ENCODE measurements at regions of chr6 and their contacts with region 1.

Region 1: GRCh38 chr6:34425498-34426410 is at the start of gene RPS10:
- DNase-seq: peak; percentile 95
- ATAC-seq: peak; percentile 95
- H3K4me3 ChIP-seq: peak within 1 kb of the TSS; percentile 99
- H3K27ac ChIP-seq: peak within 1 kb of the TSS; percentile 47
- H3K4me1 ChIP-seq: peaks cover 19% of the 10 kb centered on the region
- H3K27me3 ChIP-seq: no peaks in the 10 kb centered on the region
- CTCF ChIP-seq: no peak
- total RNA-seq, gene RPS10: 2,227 and 3,060 TPM in 2 replicates

Region 2: DNA sequence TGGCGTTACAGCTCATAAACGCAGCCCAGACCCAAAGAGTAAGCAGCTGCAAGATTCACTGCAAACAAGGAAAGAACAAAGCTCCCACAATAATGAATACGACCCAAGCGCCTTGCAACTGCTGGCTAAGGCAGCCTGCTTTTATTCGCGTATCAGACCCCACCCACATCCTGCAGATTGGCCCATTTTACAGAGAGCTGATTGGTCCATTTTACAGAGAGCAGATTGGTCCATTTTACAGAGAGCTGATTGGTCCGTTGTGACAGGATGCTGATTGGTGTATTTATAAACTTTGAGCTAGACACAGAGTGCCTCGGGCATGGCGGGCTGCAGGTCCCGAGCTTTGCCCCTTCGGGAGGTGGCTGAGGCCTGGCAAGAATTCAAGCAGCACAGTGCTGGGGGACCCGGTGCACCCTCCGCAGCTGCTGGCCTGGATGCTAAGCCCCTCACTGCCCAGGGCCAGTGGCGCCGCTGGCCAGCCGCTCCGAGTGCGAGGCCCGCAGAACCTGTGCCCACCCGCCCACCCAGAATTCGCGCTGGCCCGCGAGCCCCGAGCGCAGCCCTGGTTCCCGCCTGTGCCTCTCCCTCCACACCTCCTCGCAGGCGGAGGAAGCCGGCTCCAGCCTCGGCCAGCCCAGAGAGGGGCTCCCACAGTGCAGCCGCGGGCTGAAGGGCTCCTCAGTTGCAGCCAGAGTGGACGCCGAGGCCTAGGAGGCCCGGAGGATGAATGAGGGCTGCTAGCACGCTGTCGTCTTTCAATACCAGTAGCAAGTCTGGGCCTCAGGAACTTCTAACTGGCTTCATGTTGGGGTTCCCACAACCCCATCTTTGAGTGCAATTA is 11.3 kb after region 1 on chr6:
- CTCF ChIA-PET with region 1: no interaction called
- POLR2A ChIA-PET with region 1: no interaction called
- intact Hi-C with region 1: no loop called
- DNase-seq: no peak
- ATAC-seq: no peak
- H3K4me3 ChIP-seq: no peak overlapping the region
- H3K27ac ChIP-seq: no peak overlapping the region
- H3K4me1 ChIP-seq: no peaks in the 10 kb centered on the region
- H3K27me3 ChIP-seq: no peaks in the 10 kb centered on the region
- CTCF ChIP-seq: no peak

Region 3: DNA sequence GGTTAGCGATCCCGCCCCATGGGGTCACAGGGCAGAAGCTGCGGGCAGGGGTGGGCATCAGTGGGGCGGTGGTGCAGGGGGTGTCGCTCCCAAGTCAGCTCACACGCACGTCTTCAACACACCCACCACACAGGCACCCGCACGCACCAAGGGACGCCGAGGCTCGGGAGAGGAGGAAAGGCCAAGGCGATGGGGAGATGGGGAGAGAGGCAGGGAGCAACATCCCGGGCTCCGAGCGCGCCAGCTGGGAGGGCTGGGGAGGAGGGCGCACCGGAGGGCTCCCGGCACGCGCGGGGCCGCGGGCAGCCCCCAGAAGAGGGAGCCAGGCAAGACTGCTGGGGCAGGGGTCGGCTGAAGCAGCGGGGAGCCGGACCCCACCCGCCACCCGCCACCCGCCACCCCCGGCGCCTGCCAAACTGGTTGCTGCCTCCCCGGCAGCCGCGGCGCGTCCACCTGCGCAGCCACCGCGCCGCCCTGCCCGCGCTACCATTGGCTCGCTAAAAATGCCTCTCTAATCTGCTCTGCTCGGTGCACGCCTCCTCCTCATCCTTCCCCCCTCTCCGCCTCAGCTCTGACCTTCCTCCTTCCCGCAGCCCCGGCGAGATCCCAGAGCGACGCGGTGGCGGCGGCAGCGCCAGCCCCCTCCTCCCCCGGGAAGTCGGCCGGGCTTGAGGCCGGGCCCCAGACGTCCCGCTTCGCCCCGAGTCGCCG is 39.9 kb after region 1 on chr6 and contains the start of gene PACSIN1:
- CTCF ChIA-PET with region 1: no interaction called
- POLR2A ChIA-PET with region 1: no interaction called
- intact Hi-C with region 1: no loop called
- DNase-seq: peak; percentile 51
- ATAC-seq: peak; percentile 62
- H3K4me3 ChIP-seq: peak within 1 kb of the TSS; percentile 71
- H3K27ac ChIP-seq: no peak within 1 kb of the TSS
- H3K4me1 ChIP-seq: peaks cover 19% of the 10 kb centered on the region; the same call in 1 of the 2 replicates
- H3K27me3 ChIP-seq: no peaks in the 10 kb centered on the region
- CTCF ChIP-seq: no peak
- total RNA-seq, gene PACSIN1: 2.3 and 3.5 TPM in 2 replicates

Region 4: DNA sequence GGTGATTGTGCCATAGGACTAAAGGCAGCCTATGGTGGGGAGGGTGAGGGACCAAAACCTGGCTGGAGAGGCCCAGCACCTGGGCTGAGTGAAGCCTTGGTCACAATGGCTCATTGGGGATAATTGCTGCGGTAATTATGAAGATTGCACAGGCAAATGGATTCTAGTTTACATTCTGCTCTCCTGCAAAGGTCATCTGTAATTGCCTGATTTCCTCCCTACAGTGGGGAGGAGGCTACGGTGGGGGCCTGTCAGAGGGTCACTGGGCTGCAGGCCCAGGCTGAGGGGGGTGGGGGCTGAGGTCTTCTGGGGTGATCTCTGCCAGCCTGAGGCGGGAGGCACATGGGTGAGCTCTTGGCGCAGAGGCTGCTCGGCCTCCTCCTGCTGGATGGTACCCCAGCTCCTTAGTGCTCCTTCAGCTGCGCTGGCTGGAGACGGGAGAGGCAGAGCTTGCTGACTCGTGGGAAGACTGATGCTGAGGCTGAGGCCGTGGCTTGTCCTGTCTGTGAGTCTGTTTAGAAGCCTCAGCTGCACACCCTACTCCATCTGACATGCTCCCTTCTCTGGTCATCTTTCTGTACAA is 70.4 kb after region 1 on chr6:
- CTCF ChIA-PET with region 1: no interaction called
- POLR2A ChIA-PET with region 1: interaction called, 10 read pairs
- intact Hi-C with region 1: no loop called
- DNase-seq: no peak
- ATAC-seq: no peak
- H3K4me3 ChIP-seq: no peak overlapping the region
- H3K27ac ChIP-seq: no peak overlapping the region
- H3K4me1 ChIP-seq: no peaks in the 10 kb centered on the region
- H3K27me3 ChIP-seq: no peaks in the 10 kb centered on the region
- CTCF ChIP-seq: no peak

Region 5: DNA sequence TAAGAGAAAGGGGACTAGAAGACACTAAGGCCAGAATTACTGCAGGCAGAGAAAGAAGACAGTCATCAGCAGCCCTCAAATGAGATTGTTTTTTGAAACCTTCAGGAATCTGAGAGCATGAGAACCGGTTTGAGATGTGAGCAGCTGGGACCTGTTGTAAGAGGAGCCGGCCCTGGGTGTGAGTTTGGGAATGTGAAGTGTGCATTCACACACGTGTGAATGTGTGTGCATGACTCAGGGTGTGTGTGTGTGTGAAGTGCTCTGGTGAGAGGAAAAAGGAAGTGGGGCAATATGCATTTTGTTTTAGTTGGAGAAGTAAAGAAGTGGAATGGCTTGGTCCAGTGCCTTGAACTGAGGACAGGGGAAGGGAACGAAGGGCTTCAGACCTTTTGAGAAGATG is 792.3 kb after region 1 on chr6:
- CTCF ChIA-PET with region 1: no interaction called
- POLR2A ChIA-PET with region 1: interaction called, 11 read pairs
- intact Hi-C with region 1: no loop called
- DNase-seq: no peak
- ATAC-seq: no peak
- H3K4me3 ChIP-seq: no peak overlapping the region
- H3K27ac ChIP-seq: no peak overlapping the region
- H3K4me1 ChIP-seq: peaks cover 13% of the 10 kb centered on the region; the same call in 1 of the 2 replicates
- H3K27me3 ChIP-seq: no peaks in the 10 kb centered on the region
- CTCF ChIP-seq: no peak

Measured in PC-3 (cell line).